ENCODE measurements at regions of chr15 and their contacts with region 1.

Region 1: DNA sequence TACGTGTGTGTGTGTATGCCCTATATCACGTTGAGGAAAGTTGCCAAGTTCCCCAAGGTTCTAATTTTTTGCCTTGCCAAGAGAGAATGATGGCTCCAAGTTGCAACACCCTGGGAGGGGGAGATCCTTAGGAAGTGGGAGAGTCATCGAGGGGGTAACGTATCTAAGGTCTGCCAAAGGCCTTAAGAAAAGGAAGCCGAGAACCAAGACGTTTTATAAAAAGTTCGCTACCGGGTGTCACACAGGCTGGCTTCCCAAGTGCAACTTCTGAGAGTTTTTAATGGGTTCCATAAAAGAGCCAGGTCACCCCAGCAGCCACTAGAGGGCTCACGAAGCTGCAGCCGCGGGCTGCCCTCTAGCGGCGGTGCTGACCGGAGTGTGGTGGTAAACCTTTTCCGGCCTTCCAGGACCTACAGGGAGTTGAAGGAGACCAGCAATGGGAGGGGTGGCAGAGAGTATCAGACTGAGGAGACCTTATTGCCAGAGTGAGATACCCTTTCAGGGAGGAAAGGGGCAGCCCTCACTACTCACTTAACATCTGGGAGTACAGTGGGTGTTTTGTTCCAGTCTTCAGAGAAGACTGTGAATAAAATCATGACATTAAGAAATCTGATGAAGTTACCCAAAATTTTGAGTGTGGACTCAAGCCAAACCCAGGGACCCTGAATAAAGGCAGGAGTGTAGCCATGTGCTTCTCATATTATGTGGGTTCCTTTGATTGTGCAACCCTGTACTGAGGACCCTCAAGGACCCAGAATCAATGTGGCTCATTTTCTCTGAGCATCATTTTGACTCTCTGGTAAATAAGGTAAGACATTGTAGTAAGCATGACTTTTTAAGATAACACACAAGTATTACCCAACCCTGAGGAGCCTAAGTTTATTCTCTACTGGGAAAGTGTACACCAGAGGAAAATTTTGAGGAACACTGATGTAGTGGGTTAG is 2.5 kb upstream of the RFX7 start:
- DNase-seq: peak; percentile 91 to 93 (median 92)
- H3K4me3 ChIP-seq: peak overlapping the region in 6 of 7 experiments; percentile 25 to 88 (median 66)
- H3K27ac ChIP-seq: peak overlapping the region in 1 of 2 experiments; percentile 80
- H3K4me1 ChIP-seq: peaks cover 22 to 42% (median 34%) of the 10 kb centered on the region in 4 experiments
- H3K27me3 ChIP-seq: no peaks in the 10 kb centered on the region

Region 2: DNA sequence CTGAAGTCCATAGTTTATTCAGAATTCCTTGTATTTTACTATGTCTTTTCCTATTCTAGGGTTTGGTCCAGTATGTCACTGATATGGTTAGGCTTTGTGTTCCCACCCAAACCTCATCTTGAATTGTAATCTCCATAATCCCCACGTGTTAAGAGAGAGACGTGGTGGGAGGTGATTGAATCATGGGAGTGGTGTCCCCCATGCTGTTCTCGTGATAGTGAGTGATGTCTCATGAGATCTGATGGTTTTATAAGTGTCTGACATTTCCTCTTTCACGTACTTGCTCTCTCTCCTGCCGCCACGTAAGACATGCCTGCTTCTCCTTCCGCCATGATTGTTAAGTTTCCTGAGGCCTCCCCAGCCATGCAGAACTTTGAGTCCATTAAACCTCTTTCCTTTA is 112.5 kb after region 1 on chr15:
- CTCF ChIA-PET with region 1: no interaction called
- POLR2A ChIA-PET with region 1: no interaction called
- DNase-seq: no peak
- H3K4me3 ChIP-seq: no peak overlapping the region
- H3K27ac ChIP-seq: no peak overlapping the region
- H3K4me1 ChIP-seq: no peaks in the 10 kb centered on the region
- H3K27me3 ChIP-seq: no peaks in the 10 kb centered on the region

Region 3: GRCh38 chr15:56428821-56429458 is 182.8 kb after region 1 on chr15:
- CTCF ChIA-PET with region 1: interaction called, 31 read pairs
- POLR2A ChIA-PET with region 1: no interaction called
- DNase-seq: peak; percentile 25 to 61 (median 60)
- H3K4me3 ChIP-seq: no peak overlapping the region
- H3K27ac ChIP-seq: no peak overlapping the region
- H3K4me1 ChIP-seq: no peaks in the 10 kb centered on the region
- H3K27me3 ChIP-seq: no peaks in the 10 kb centered on the region

Measured in common myeloid progenitor, CD34-positive (primary cell).